ENCODE measurements at regions of chr5 and their contacts with region 1.

Region 1: GRCh38 chr5:40879163-40879942 is 29.9 kb upstream of the C7 start:
- DNase-seq: no peak
- H3K4me3 ChIP-seq: no peak overlapping the region
- H3K27ac ChIP-seq: no peak overlapping the region
- H3K4me1 ChIP-seq: peaks cover 0 to 8% (median 4%) of the 10 kb centered on the region in 6 donors
- H3K27me3 ChIP-seq: no peaks in the 10 kb centered on the region
- CTCF ChIP-seq: peak in 9 of 11 experiments; percentile 30 to 70 (median 58)
- POLR2A ChIP-seq: no peak

Region 2: GRCh38 chr5:39714036-39714698 is 1165.2 kb before region 1 on chr5:
- intact Hi-C with region 1: loop called (anchors 5 kb)
- DNase-seq: no peak
- H3K4me3 ChIP-seq: no peak overlapping the region
- H3K27ac ChIP-seq: no peak overlapping the region
- H3K4me1 ChIP-seq: peaks cover 0 to 10% (median 0%) of the 10 kb centered on the region in 6 donors
- H3K27me3 ChIP-seq: no peaks in the 10 kb centered on the region
- CTCF ChIP-seq: peak in 9 of 11 experiments; percentile 18 to 69 (median 50)
- POLR2A ChIP-seq: no peak

Region 3: DNA sequence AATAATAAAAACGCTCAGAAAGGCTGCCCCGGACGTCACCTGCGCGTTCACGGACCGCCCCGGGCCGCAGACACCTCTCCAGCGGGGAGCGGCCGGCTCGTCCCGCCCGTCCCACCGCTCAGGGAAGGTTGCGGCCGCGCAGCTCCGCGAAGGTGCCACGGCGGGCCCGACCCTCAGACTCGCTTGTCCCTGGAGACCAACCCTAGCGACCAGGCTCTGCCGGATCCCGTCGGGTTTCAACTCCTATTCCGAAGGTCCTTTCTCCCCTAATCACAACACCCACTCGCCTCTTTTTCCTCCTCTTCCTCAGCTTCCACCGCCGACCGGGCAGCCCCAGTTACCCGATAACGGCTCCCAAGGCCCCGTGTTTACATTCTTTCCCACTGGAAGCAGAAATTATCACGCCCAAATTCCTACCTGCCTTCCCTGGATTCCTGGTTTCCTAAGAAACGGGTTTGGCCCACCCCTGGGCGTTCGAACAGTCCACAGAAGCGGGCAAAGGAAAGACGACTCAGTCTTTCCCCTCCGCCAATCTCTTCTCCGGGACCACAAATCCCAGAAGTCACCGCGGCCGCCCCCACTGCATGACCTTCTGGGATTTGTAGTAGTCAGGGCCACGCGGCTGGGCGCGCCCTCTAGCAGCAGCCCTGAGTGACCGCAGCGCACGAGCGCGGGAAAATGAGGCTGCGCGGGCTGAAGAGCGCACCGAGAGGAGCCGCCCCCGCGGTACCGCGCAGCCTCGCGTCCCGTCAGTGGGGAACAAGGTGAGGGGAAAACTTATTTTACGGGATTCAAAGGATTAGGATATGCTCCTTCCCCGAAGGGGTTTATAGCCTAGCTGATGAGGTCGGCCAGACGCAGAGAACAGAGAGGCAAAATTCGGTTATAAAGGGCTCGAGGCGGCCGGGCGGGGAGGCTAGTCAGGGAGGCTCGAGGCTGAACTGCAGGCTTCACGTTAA is 123.7 kb before region 1 on chr5 and contains the start of gene TTC33:
- intact Hi-C with region 1: loop called (anchors 10 kb)
- DNase-seq: peak; percentile 99
- H3K4me3 ChIP-seq: peak within 1 kb of the TSS; percentile 78 to 95 (median 86)
- H3K27ac ChIP-seq: peak within 1 kb of the TSS; percentile 86 to 94 (median 90)
- H3K4me1 ChIP-seq: peaks cover 10 to 40% (median 21%) of the 10 kb centered on the region in 6 donors
- H3K27me3 ChIP-seq: no peaks in the 10 kb centered on the region
- CTCF ChIP-seq: peak in 10 of 11 experiments; percentile 24 to 78 (median 70)
- POLR2A ChIP-seq: no peak
- total RNA-seq, gene TTC33: 9.3 to 17.9 (median 16.2) TPM

Region 4: GRCh38 chr5:40991168-40991980 is 112.0 kb after region 1 on chr5:
- intact Hi-C with region 1: no loop called
- DNase-seq: no peak
- H3K4me3 ChIP-seq: no peak overlapping the region
- H3K27ac ChIP-seq: peak overlapping the region in 7 of 8 donors; percentile 41 to 71 (median 63)
- H3K4me1 ChIP-seq: peaks cover 0 to 6% (median 0%) of the 10 kb centered on the region in 6 donors
- H3K27me3 ChIP-seq: no peaks in the 10 kb centered on the region
- CTCF ChIP-seq: no peak
- POLR2A ChIP-seq: no peak